GM10248 (cell line): ENCODE measurements at regions of chr3 and their contacts with region 1.

Region 1: DNA sequence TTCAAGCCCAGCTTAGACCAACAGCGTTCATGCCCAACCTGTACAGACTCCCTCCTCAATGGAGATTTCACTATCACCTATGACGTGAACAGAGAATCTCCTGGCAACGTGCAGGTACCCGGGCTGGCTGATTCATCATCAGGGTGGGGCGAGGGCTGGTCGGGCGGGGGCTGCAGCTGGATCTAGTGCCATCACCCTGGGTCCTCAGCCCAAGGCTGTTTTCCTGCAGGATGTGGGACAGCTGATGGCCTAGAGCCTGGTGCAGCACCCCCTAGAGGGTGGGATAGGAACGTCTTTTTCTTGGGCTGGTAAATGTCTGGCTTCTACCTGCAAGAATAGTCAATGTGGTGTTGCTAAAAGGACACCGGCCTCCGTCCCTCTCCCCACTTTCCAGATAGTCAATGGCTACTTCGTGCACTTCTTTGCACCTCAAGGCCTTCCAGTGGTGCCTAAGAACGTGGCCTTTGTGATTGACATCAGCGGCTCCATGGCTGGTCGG is 4.4 kb downstream of the ITIH3 start:
- DNase-seq: peak; percentile 72
- CTCF ChIP-seq: peak; percentile 40

Region 2: GRCh38 chr3:52712291-52713212 is 86.5 kb before region 1 on chr3:
- CTCF ChIA-PET with region 1: no interaction called
- POLR2A ChIA-PET with region 1: no interaction called
- DNase-seq: no peak
- CTCF ChIP-seq: no peak

Region 3: GRCh38 chr3:52742418-52743041 is 56.5 kb before region 1 on chr3:
- CTCF ChIA-PET with region 1: interaction called, 10 read pairs
- POLR2A ChIA-PET with region 1: no interaction called
- DNase-seq: peak; percentile 63
- CTCF ChIP-seq: peak; percentile 60

Region 4: DNA sequence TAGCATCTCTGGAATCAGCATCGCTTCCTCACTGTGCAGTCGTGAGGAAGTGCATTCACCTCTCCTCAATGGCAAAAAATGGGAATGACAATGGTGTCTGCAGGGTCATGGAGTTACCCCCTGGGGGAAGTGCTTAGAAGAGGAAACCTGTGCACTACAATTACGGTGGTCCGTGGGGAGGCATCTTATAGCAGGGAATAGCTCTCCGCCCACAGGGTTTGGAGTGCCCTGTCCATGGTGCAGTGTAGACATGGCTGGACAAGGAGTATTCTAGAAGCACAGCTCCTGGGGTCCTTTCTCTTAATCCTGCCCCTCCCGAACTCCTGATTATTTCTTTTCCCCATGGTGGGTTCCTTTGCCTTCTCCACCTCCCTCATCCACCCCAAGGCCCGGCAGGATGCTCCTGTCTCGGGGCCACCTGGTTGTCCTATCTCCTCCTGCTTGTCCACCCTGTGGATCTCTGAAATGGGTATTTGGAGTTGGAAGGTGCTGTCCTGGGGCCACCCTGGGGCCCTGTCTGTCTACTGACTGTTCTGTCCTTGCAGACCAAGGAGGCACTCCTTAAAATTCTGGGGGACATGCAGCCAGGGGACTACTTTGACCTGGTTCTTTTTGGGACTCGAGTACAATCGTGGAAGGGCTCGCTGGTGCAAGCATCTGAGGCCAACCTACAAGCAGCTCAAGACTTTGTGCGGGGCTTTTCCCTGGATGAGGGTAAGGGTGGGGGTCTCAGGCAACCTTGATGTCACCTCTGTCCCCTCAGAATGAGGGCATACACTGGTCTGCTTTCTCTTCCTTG is 16.4 kb before region 1 on chr3:
- CTCF ChIA-PET with region 1: interaction called, 12 read pairs
- POLR2A ChIA-PET with region 1: no interaction called
- DNase-seq: no peak
- CTCF ChIP-seq: no peak

Region 5: GRCh38 chr3:52787672-52788625 is 11.1 kb before region 1 on chr3:
- CTCF ChIA-PET with region 1: interaction called, 12 read pairs
- POLR2A ChIA-PET with region 1: no interaction called
- DNase-seq: no peak
- CTCF ChIP-seq: no peak

Region 6: GRCh38 chr3:52820736-52821135 is 21.7 kb after region 1 on chr3:
- CTCF ChIA-PET with region 1: interaction called, 16 read pairs
- POLR2A ChIA-PET with region 1: no interaction called
- DNase-seq: peak; percentile 65
- CTCF ChIP-seq: peak; percentile 62